ENCODE measurements at regions of chr19 and their contacts with region 1.

Region 1: GRCh38 chr19:9796113-9796773 is 22.6 kb downstream of the FBXL12 start:
- DNase-seq: peak; percentile 75 to 93
- H3K4me3 ChIP-seq: no peak overlapping the region
- H3K27ac ChIP-seq: no peak overlapping the region
- H3K4me1 ChIP-seq: peaks cover 31% of the 10 kb centered on the region
- H3K27me3 ChIP-seq: no peaks in the 10 kb centered on the region
- CTCF ChIP-seq: peak; percentile 90

Region 2: GRCh38 chr19:9140159-9140874 is 655.9 kb before region 1 on chr19 and contains the start of gene ZNF317:
- CTCF ChIA-PET with region 1: no interaction called
- POLR2A ChIA-PET with region 1: no interaction called
- intact Hi-C with region 1: loop called (anchors 1 kb)
- DNase-seq: peak; percentile 82 to 87
- H3K4me3 ChIP-seq: peak within 1 kb of the TSS; percentile 85
- H3K27ac ChIP-seq: peak within 1 kb of the TSS; percentile 50
- H3K4me1 ChIP-seq: peaks cover 10% of the 10 kb centered on the region
- H3K27me3 ChIP-seq: no peaks in the 10 kb centered on the region
- CTCF ChIP-seq: no peak
- total RNA-seq, gene ZNF317: 25.5 and 28.2 TPM in 2 replicates

Region 3: GRCh38 chr19:9171393-9171991 is 624.8 kb before region 1 on chr19:
- CTCF ChIA-PET with region 1: no interaction called
- POLR2A ChIA-PET with region 1: no interaction called
- intact Hi-C with region 1: no loop called
- DNase-seq: no peak
- H3K4me3 ChIP-seq: no peak overlapping the region
- H3K27ac ChIP-seq: no peak overlapping the region
- H3K4me1 ChIP-seq: no peaks in the 10 kb centered on the region
- H3K27me3 ChIP-seq: 0 out of 2 replicates have a peak, but pooled peaks cover 6% of the 10 kb centered on the region
- CTCF ChIP-seq: no peak

Region 4: DNA sequence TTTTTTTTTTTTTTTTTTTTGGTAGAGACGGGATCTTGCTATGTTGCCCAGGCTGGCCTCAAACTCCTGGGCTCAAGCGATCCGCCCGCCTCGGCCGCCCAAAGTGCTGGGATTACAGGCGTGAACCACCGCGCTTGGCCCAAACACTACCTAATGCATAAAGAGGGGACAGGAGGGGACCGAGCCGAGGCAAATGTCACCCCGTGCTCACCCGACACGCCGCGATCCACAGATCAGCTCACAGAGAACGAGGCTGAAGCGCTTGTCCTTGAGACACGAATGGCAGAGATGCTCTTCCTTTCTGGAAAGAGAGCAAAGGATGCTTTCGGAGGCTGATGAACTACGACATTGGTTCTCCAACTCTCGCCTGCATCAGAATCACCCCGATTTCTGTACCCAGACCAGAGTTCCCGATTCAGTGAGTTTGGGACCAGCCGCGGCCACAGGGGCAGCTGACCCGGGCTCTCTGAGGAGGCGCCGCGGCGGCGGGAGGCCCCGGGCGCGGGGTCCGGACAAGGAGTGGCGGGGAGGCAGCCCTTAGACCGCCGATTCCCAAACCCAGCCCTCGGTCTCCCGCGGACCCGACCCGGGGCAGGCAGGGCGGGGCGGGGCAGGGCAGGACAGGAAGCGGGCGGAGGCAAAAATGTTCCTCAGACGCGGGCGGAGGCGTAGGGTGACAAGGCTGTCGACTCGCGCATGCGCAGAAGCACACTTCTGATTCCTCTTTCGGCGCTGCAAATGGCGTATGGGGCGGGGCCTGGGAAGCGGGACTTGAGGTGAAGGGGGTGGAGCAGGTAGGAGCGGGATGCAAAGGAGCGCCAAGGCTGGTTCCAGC is 486.9 kb before region 1 on chr19 and contains the start of gene ZNF699:
- CTCF ChIA-PET with region 1: no interaction called
- POLR2A ChIA-PET with region 1: no interaction called
- intact Hi-C with region 1: loop called (anchors 10 kb)
- DNase-seq: peak; percentile 96
- H3K4me3 ChIP-seq: peak within 1 kb of the TSS; percentile 64
- H3K27ac ChIP-seq: peak within 1 kb of the TSS; percentile 14; the same call in 1 of the 2 replicates
- H3K4me1 ChIP-seq: peaks cover 9% of the 10 kb centered on the region; the same call in 1 of the 2 replicates
- H3K27me3 ChIP-seq: no peaks in the 10 kb centered on the region
- CTCF ChIP-seq: no peak
- total RNA-seq, gene ZNF699: 2.2 and 2.6 TPM in 2 replicates

Region 5: DNA sequence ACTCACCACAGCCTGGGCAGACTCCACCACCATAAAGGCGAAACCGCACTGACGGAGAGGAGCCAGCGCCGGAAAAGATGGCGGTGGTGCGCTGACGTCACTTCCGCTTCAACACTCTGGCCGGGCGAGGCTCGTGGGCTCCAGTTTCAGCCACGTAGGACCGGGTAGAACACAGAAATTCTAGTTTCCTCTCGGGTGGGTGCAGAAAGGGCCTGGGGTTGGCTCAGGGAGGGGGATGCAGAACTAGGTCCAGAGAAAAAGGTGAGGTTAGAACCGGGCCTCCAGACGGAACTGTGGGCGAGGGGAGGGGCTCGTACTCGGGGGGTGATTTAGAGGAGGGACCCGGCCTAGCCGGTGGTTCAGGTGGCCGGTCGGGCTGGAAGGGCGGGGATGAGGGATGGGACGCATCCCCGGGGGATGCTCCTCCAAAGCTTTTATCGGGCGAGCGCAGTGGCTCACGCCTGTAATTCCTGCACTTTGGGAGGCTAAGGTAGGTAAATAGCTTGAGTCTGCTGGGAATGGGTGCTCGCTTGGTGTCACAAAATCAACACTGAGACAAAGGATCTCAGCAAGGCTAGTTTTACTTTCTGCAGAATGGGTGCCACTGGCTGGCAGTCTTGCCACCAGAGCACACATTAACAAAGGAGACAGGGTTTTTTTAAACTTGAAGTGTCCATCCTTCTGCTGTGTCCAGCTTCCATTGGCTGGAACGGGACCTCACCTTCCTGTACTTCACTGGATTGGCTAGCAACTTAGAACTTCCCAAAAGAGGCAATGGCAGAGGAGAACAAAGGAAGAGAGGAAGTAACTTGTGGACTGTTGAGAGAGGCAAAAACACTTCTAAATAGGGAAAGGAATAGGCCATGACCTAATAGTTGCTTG is 174.8 kb before region 1 on chr19 and contains the start of gene ZNF561:
- CTCF ChIA-PET with region 1: interaction called, 4 read pairs
- POLR2A ChIA-PET with region 1: no interaction called
- intact Hi-C with region 1: loop called (anchors 1 kb)
- DNase-seq: peak; percentile 62 to 74
- H3K4me3 ChIP-seq: peak within 1 kb of the TSS; percentile 86
- H3K27ac ChIP-seq: peak within 1 kb of the TSS; percentile 65
- H3K4me1 ChIP-seq: peaks cover 9% of the 10 kb centered on the region
- H3K27me3 ChIP-seq: no peaks in the 10 kb centered on the region
- CTCF ChIP-seq: no peak
- total RNA-seq, gene ZNF561: 28.9 and 31.2 TPM in 2 replicates

Region 6: DNA sequence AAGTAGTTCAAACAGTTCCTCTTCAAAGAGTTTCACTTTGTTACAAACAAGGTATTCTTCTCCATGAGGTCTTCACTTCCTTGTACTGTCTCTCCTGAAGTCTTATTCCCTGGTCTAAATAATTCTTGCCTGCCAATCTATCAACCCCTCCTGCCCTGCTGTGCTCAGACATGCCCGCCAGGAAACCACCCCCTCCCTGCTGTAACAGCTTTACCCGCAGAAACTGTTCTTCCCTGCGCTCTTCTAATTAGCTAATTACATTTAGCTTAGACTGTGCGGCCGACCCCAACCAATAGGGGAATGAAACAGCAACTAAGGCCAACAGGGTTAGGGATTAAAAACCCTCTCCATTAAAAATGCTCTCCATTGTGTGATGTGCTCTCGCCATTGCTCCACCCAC is 74.4 kb before region 1 on chr19:
- CTCF ChIA-PET with region 1: no interaction called
- POLR2A ChIA-PET with region 1: no interaction called
- intact Hi-C with region 1: no loop called
- DNase-seq: no peak
- H3K4me3 ChIP-seq: no peak overlapping the region
- H3K27ac ChIP-seq: no peak overlapping the region
- H3K4me1 ChIP-seq: no peaks in the 10 kb centered on the region
- H3K27me3 ChIP-seq: peaks cover 44% of the 10 kb centered on the region
- CTCF ChIP-seq: no peak

Region 7: DNA sequence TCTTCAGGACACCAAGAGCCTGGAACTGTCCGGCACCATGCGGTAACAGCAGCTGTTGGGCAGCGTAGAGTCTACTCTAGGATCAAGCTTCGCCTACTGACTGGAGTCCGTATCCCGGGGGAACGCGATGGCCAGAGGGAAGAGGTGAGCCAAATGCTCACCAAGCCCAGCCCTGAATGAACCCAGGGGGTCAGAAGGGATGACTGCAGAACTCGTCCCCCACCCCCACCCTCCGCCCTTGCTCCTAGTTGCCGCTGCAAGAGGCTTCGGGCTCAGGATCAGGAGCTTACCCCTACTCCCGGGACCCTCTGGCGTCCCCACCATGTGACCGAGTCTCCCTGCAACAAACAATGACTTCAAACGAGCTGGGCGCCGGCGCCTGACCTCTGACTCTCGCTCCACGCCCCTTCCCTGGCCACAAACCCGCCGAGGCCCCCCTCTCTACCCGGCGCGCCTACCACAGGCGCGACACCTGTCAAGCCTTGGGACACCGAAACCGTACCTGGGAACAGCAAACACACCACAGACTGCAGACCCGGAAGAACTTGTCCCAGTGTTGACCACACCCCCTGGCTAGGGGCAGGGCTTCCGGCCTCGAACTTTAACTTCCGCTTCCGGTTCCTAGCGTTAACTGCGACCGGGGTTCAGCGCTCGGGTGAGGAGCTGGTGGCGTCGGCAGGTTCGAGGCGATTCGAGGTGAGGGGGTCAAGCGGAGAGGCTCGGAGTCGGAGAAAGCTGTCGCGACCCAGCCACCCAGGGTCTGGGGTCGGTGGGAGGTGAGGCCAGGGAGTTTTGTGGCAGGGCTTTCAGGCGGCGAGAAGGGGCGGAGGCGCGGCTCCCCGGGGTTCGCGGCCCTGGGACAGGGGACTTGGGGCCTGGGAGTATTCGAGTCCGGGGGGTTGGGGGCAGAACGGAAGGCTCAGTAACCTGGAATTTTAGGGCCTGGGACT is 31.3 kb after region 1 on chr19 and contains the start of gene UBL5:
- CTCF ChIA-PET with region 1: interaction called, 10 read pairs
- POLR2A ChIA-PET with region 1: no interaction called
- intact Hi-C with region 1: no loop called
- DNase-seq: peak; percentile 87 to 89
- H3K4me3 ChIP-seq: peak within 1 kb of the TSS; percentile 81
- H3K27ac ChIP-seq: peak within 1 kb of the TSS; percentile 66
- H3K4me1 ChIP-seq: peaks cover 16% of the 10 kb centered on the region
- H3K27me3 ChIP-seq: no peaks in the 10 kb centered on the region
- CTCF ChIP-seq: no peak
- total RNA-seq, gene UBL5: 400 and 403 TPM in 2 replicates

Measured in PC-9 (cell line).